Activated naive CD4-positive, alpha-beta T cell treated with anti-CD3 and anti-CD28 coated beads for 36 hours (primary cell): ENCODE measurements at regions of chr7 and their contacts with region 1.

Region 1: GRCh38 chr7:32279500-32279899 is 209.3 kb upstream of the PDE1C start:
- DNase-seq: no peak
- H3K4me3 Mint-ChIP-seq: no peak overlapping the region
- H3K27ac Mint-ChIP-seq: no peak overlapping the region
- H3K4me1 Mint-ChIP-seq: no peaks in the 10 kb centered on the region
- H3K27me3 Mint-ChIP-seq: no peaks in the 10 kb centered on the region

Region 2: DNA sequence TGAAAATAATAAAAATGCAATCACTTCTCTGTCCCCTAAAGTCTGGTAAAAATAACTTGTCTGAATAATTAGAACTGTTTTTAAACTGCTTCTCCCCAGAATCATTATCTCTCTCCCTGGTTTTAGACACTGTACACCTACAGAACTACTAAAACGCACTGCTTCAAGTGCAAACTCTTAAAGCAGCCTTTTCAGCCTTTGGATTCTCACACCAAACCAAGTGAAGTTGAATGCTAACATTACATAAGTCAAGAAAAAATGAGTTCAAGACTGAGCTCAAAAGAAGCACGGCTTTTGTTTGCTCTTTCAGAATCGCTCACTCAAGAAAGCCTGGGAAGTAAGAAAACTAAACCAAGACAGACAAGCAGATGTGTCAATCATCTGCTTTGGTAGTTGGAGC is 21.9 kb after region 1 on chr7:
- CTCF ChIA-PET with region 1: interaction called, 10 read pairs
- intact Hi-C with region 1: no loop called
- DNase-seq: no peak
- H3K4me3 Mint-ChIP-seq: no peak overlapping the region
- H3K27ac Mint-ChIP-seq: no peak overlapping the region
- H3K4me1 Mint-ChIP-seq: peaks cover 8% of the 10 kb centered on the region
- H3K27me3 Mint-ChIP-seq: peaks cover 32% of the 10 kb centered on the region

Region 3: DNA sequence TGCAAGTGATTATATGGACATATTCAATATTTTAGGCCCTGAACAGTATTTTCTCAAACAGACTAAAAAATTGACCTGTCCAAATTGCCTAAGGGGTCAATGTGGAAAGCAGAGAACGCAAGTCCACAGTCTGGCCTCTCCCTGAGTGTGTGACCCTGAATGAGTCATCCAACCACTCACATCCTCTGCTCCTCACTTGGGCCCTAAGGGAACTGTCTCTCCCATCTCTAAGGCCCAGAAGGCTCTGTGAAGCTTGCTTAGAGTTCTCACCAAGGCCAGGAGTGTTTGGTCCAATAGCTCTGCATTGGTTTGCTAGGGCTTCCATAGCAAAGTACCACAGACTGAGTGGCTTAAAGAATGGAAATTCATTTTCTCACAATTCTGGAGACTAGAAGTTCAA is 55.6 kb after region 1 on chr7:
- CTCF ChIA-PET with region 1: no interaction called
- intact Hi-C with region 1: no loop called
- DNase-seq: no peak
- H3K4me3 Mint-ChIP-seq: no peak overlapping the region
- H3K27ac Mint-ChIP-seq: no peak overlapping the region
- H3K4me1 Mint-ChIP-seq: no peaks in the 10 kb centered on the region
- H3K27me3 Mint-ChIP-seq: peaks cover 4% of the 10 kb centered on the region